ENCODE measurements at regions of chr5 and their contacts with region 1.

Region 1: DNA sequence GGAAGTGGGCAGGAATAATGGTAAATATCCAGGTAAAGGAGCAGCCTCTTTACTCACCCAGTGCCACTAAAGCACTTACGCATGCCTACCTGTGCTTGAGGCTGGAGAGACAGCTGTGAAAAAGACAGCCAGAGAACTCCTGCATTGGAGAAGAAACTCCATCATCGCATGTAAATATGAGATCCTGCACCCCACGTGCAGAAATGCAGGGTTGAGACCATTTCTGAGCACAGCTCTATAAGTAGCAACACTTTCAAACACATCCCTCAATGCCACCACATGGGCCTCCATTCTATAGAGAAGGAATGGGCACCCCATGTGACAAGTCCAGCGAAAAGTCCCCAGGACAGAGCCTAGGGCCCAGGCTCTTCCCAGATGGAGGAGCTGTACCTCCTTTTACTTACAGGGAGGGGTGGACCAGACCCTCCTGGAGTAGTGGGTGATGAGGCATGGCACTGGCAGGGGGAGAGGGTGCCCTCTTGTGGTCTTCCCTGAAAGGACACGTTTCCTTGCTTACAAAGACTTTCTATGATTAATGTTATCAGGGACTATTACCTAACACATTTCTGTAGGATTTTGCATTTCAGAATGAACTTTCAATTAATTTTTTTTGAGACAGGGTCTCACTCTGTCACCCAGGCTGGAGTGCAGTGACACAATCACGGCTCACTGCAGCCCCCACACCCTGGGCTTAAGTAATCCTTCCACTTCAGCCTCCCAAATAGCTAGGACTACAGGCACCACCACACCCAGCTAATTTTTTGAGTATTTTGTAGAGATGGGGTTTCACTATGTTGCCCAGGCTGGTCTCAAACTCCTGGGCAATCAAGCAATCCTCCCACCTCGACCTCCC is 55.3 kb upstream of the IL17B start:
- DNase-seq: peak; percentile 73
- H3K4me3 Mint-ChIP-seq: no peak overlapping the region
- H3K27ac Mint-ChIP-seq: no peak overlapping the region
- H3K4me1 Mint-ChIP-seq: peaks cover 14% of the 10 kb centered on the region
- H3K27me3 Mint-ChIP-seq: no peaks in the 10 kb centered on the region

Region 2: GRCh38 chr5:149298842-149299404 is 135.5 kb before region 1 on chr5:
- CTCF ChIA-PET with region 1: interaction called, 6 read pairs
- intact Hi-C with region 1: loop called (anchors 5 kb)
- DNase-seq: no peak
- H3K4me3 Mint-ChIP-seq: no peak overlapping the region
- H3K27ac Mint-ChIP-seq: no peak overlapping the region
- H3K4me1 Mint-ChIP-seq: peaks cover 55% of the 10 kb centered on the region
- H3K27me3 Mint-ChIP-seq: no peaks in the 10 kb centered on the region

Region 3: DNA sequence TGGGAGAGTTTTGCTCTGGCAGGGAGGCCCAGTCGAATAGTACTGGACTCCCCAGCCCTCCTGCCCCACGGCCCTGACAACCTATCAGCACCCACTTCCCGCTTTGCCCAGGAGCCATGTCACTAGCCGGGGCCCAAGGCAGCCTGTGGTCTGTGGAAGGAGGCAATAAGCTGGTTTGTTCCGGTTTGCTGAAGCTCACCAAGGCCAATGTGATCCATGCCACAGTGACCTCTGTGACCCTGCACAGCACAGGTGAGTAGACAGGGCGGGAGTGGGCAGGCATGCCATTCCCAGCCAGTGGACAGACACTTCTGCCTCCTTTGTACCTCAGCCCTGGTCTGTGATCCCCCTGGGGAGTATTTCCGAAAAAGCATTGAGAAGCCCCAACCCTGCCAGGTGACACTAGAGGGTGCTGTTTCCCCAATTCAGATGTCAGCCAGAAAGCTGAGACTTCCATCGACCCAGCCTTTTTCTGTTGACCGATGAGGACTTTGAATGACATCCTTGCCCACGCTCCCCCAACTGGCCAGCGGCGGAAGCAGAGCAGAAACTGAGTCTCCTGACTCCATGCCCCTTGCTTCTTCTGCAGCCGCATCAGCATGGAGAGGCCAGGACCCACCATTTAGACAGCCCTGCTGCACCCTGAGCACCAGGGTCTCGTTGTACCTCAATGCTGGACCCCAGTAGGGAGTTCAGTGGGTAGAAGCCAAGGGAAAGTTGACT is 67.0 kb before region 1 on chr5:
- CTCF ChIA-PET with region 1: interaction called, 28 read pairs
- intact Hi-C with region 1: loop called (anchors 1 kb)
- DNase-seq: peak; percentile 72
- H3K4me3 Mint-ChIP-seq: no peak overlapping the region
- H3K27ac Mint-ChIP-seq: no peak overlapping the region
- H3K4me1 Mint-ChIP-seq: peaks cover 10% of the 10 kb centered on the region
- H3K27me3 Mint-ChIP-seq: no peaks in the 10 kb centered on the region

Region 4: GRCh38 chr5:149381987-149382340 is 52.4 kb before region 1 on chr5:
- CTCF ChIA-PET with region 1: interaction called, 79 read pairs
- intact Hi-C with region 1: loop called (anchors 1 kb)
- DNase-seq: peak; percentile 87
- H3K4me3 Mint-ChIP-seq: no peak overlapping the region
- H3K27ac Mint-ChIP-seq: no peak overlapping the region
- H3K4me1 Mint-ChIP-seq: no peaks in the 10 kb centered on the region
- H3K27me3 Mint-ChIP-seq: no peaks in the 10 kb centered on the region

Region 5: GRCh38 chr5:149422366-149423048 is 11.9 kb before region 1 on chr5:
- CTCF ChIA-PET with region 1: interaction called, 19 read pairs
- intact Hi-C with region 1: no loop called
- DNase-seq: peak; percentile 38
- H3K4me3 Mint-ChIP-seq: no peak overlapping the region
- H3K27ac Mint-ChIP-seq: no peak overlapping the region
- H3K4me1 Mint-ChIP-seq: peaks cover 14% of the 10 kb centered on the region
- H3K27me3 Mint-ChIP-seq: no peaks in the 10 kb centered on the region

Region 6: DNA sequence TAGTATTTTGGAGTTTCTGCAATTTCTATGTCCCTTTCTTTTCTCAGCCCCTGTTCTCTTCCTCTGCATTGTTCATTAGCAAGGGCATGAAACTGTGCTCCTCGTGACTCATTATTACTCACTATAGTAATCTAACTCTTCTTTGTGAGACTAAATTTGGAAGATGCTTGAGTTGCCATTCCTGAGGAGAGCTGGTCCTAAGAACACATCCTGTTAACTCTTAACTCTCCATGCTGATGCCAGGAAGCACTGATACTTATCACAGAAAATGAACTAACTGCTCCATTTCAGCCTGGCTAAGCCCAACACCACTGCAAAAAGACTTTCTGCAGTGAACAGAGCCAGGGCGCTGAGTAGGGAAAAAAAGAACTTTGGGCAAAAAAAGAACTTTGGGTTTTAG is 127.5 kb after region 1 on chr5:
- CTCF ChIA-PET with region 1: interaction called, 149 read pairs
- intact Hi-C with region 1: loop called (anchors 1 kb)
- DNase-seq: peak; percentile 20
- H3K4me3 Mint-ChIP-seq: no peak overlapping the region
- H3K27ac Mint-ChIP-seq: peak overlapping the region; percentile 70
- H3K4me1 Mint-ChIP-seq: peaks cover 32% of the 10 kb centered on the region
- H3K27me3 Mint-ChIP-seq: no peaks in the 10 kb centered on the region

Measured in activated naive CD4-positive, alpha-beta T cell treated with anti-CD3 and anti-CD28 coated beads for 36 hours (primary cell).